PC-3 (cell line): ENCODE measurements at regions of chr19 and their contacts with region 1.

Region 1: GRCh38 chr19:5827891-5828660 is 11.4 kb downstream of the FUT6 start:
- DNase-seq: peak; percentile 88
- ATAC-seq: peak; percentile 64
- H3K4me3 ChIP-seq: peak overlapping the region; percentile 59
- H3K27ac ChIP-seq: peak overlapping the region; percentile 35; the same call in 1 of the 2 replicates
- H3K4me1 ChIP-seq: peaks cover 14% of the 10 kb centered on the region; the same call in 1 of the 2 replicates
- H3K27me3 ChIP-seq: no peaks in the 10 kb centered on the region
- CTCF ChIP-seq: no peak

Region 2: DNA sequence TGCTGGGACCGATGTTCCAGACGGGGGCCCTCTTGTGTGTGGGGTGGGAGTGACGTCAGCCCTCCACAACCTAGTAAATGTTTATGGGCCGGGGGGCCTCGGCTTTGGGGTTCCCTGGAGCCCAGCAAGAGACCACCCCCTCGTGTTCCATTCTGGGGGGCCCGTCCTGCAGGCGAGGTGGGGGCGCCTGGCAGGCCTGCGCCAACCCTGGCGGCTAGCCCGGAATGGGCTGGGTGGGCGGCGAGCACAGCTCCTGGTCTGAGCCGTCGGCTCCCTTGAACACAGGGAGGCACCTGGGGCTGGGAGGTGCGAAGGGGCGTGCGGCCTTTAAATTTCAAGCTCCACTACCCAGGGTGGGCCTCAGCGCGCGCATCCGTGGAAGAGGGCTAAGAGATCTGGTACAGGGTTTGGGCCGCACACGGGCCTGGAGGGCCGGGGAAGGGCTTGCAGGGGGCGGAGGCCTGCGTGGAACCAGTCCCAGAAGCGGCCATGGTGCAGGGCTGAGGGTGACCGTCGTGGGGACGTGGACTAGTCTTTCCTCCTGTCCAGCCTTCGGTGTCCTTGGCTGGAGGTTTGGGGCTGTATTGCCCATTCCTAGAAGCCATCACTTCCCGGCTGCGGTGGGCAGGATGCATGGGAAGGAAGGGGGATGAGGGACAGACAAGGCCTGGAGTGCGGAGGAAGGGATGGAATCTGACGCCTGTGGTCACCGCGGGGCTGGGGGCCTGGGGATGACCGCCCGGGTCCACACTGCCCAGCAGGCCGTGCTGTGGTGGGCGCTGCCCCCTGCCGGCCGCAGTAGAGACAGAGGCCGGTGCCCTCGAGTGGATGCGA is 64.1 kb after region 1 on chr19:
- CTCF ChIA-PET with region 1: no interaction called
- POLR2A ChIA-PET with region 1: no interaction called
- intact Hi-C with region 1: loop called (anchors 5 kb)
- DNase-seq: peak; percentile 60
- ATAC-seq: peak; percentile 76
- H3K4me3 ChIP-seq: no peak overlapping the region
- H3K27ac ChIP-seq: no peak overlapping the region
- H3K4me1 ChIP-seq: no peaks in the 10 kb centered on the region
- H3K27me3 ChIP-seq: 0 out of 2 replicates have a peak, but pooled peaks cover 4% of the 10 kb centered on the region
- CTCF ChIP-seq: peak; percentile 96

Region 3: DNA sequence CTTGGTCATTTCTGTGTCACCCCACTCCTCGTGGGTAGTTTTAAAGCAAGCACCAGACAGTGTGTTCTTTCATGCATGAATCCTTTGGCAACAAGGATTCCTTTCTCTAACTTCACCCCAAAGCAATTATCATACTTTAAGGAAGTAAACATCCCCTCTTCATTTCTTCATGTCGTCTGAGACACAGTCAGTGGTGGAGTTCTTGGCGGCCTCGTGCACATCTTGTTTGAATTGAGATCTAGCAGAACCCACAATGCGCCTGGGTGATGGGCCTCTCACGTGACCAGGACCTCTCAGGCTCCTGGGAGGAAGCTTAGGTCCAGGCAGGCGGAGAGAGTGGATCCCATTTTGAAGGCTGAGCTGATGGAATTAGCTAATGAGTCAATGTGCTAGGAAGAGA is 310.0 kb after region 1 on chr19:
- CTCF ChIA-PET with region 1: no interaction called
- POLR2A ChIA-PET with region 1: no interaction called
- intact Hi-C with region 1: no loop called
- DNase-seq: no peak
- ATAC-seq: no peak
- H3K4me3 ChIP-seq: no peak overlapping the region
- H3K27ac ChIP-seq: no peak overlapping the region
- H3K4me1 ChIP-seq: no peaks in the 10 kb centered on the region
- H3K27me3 ChIP-seq: no peaks in the 10 kb centered on the region
- CTCF ChIP-seq: no peak